Activated T-helper 1 cell treated with anti-CD3 and anti-CD28 coated beads, Interleukin-12 subunit alpha, Interleukin-12 subunit beta, Interleukin-2, Interleukin-4 antibody, amounts not matched to agents 30 ng/mL and 10 ng/mL and 1 ng/mL, durations not matched to agents 14 hours and 24 hours and 36 hours (primary cell): ENCODE measurements at regions of chr2 and their contacts with region 1.

Region 1: GRCh38 chr2:109031476-109032228 is 42.6 kb upstream of the EDAR start:
- DNase-seq: peak; percentile 38
- H3K4me3 Mint-ChIP-seq: peak overlapping the region; percentile 86
- H3K27ac Mint-ChIP-seq: peak overlapping the region; percentile 89
- H3K4me1 Mint-ChIP-seq: peaks cover 27% of the 10 kb centered on the region
- H3K27me3 Mint-ChIP-seq: no peaks in the 10 kb centered on the region

Region 2: DNA sequence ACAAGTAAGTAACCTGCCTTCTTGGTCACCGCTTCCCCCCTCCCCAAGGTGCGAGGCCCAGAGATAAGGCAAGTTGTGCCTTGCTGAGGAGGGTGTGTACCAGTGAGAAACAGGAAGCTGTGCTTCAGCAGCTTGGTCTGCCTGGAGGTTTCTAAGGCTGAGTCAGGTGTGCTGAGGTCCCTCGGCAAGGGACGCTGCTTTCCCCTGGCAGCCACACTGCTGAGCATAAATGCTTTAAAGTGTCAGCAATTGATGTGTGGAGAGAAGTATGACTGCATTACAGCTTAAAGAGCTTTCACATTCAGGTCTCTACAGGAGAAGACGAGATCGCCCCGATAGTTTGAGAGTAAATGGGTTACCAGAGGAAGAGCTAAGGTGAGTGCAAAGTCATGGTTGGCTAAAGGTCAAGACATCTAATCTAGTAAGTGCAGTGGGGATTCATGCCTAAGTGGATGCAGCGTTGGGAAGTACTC is 410.5 kb before region 1 on chr2:
- intact Hi-C with region 1: loop called (anchors 10 kb)
- DNase-seq: peak; percentile 75
- H3K4me3 Mint-ChIP-seq: peak overlapping the region; percentile 97
- H3K27ac Mint-ChIP-seq: peak overlapping the region; percentile 93
- H3K4me1 Mint-ChIP-seq: peaks cover 86% of the 10 kb centered on the region
- H3K27me3 Mint-ChIP-seq: no peaks in the 10 kb centered on the region

Region 3: DNA sequence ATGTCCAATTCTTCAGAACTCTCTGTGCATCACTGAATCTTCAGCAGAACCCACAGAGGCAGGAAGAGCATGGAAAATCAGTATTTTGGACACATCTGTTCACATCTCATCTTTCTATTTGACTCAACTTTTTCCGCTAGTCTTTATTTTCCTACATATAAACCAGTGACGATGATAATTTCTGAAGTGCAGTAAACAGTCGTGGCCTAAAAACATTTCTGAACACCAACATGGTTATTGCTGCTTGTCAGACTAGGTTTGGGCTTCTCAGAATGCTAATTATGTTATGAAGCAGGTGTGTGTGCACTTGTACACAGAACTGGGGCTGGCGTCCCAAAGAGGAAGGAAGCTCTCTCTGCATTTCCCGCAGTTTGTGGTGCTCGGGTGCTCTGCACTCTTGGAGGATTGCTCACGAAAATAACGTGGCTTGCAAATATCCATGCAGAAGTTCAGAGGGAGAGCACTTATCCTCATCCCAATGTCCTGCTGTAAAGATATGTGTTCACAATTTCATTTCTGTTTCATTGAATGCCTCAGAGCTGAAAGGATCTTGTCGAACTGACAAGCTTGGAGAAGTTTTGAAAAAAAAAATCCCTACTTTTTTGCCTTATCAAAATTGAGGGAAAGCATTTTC is 93.5 kb before region 1 on chr2:
- intact Hi-C with region 1: loop called (anchors 2 kb)
- DNase-seq: no peak
- H3K4me3 Mint-ChIP-seq: no peak overlapping the region
- H3K27ac Mint-ChIP-seq: peak overlapping the region; percentile 74
- H3K4me1 Mint-ChIP-seq: peaks cover 23% of the 10 kb centered on the region
- H3K27me3 Mint-ChIP-seq: peaks cover 2% of the 10 kb centered on the region